IMR-90 (cell line): ENCODE measurements at regions of chr10 and their contacts with region 1.

Region 1: GRCh38 chr10:4767033-4767814 is 58.8 kb upstream of the AKR1E2 start:
- DNase-seq: peak; percentile 66
- ATAC-seq: no peak
- H3K4me3 ChIP-seq: no peak overlapping the region
- H3K27ac ChIP-seq: peak overlapping the region; percentile 57
- H3K4me1 ChIP-seq: peaks cover 22% of the 10 kb centered on the region
- H3K27me3 ChIP-seq: no peaks in the 10 kb centered on the region
- CTCF ChIP-seq: peak; percentile 76
- POLR2A ChIP-seq: no peak
- RAD21 ChIP-seq: peak; percentile 83

Region 2: GRCh38 chr10:3239066-3239919 is 1527.9 kb before region 1 on chr10:
- CTCF ChIA-PET with region 1: no interaction called
- POLR2A ChIA-PET with region 1: no interaction called
- dilution Hi-C with region 1: no loop called
- in situ Hi-C with region 1: loop called (anchors 10 kb)
- intact Hi-C with region 1: loop called (anchors 2 kb)
- DNase-seq: peak; percentile 68
- ATAC-seq: peak; percentile 94
- H3K4me3 ChIP-seq: no peak overlapping the region
- H3K27ac ChIP-seq: peak overlapping the region; percentile 77; the same call in 1 of the 2 replicates
- H3K4me1 ChIP-seq: peaks cover 9% of the 10 kb centered on the region; the same call in 1 of the 2 replicates
- H3K27me3 ChIP-seq: no peaks in the 10 kb centered on the region
- CTCF ChIP-seq: peak; percentile 91
- POLR2A ChIP-seq: 0 out of 2 replicates have a peak, but pooled peaks have one; percentile 25
- RAD21 ChIP-seq: peak; percentile 99

Region 3: DNA sequence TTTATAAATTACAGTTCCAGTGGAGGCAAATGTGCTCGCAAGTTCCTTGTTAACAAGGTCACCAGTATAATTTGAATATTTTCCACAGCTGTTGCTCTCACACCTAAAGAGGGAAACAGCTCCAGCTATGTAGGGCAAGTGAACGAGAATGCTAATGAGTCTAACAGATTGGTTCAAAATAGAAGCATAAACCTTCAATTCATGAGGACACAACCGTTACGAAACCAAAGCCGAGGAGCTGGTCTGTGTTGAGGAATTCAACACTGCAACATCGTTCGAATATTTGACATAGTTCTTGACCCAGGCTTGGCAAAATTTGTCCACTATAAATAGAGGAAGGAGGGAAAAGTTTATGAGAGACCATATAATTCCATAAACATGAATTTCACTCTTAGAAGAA is 1143.5 kb before region 1 on chr10:
- CTCF ChIA-PET with region 1: no interaction called
- POLR2A ChIA-PET with region 1: no interaction called
- dilution Hi-C with region 1: no loop called
- in situ Hi-C with region 1: no loop called
- intact Hi-C with region 1: loop called (anchors 10 kb)
- DNase-seq: peak; percentile 87
- ATAC-seq: peak; percentile 78
- H3K4me3 ChIP-seq: no peak overlapping the region
- H3K27ac ChIP-seq: peak overlapping the region; percentile 15; the same call in 1 of the 2 replicates
- H3K4me1 ChIP-seq: peaks cover 11% of the 10 kb centered on the region
- H3K27me3 ChIP-seq: no peaks in the 10 kb centered on the region
- CTCF ChIP-seq: no peak
- POLR2A ChIP-seq: no peak
- RAD21 ChIP-seq: no peak

Region 4: GRCh38 chr10:4270116-4270515 is 497.1 kb before region 1 on chr10:
- CTCF ChIA-PET with region 1: no interaction called
- POLR2A ChIA-PET with region 1: no interaction called
- dilution Hi-C with region 1: no loop called
- in situ Hi-C with region 1: loop called (anchors 25 kb)
- intact Hi-C with region 1: no loop called
- DNase-seq: peak; percentile 92
- ATAC-seq: peak; percentile 94
- H3K4me3 ChIP-seq: no peak overlapping the region
- H3K27ac ChIP-seq: 0 out of 2 replicates have a peak overlapping the region, but pooled peaks have one; percentile 36
- H3K4me1 ChIP-seq: peaks cover 6% of the 10 kb centered on the region
- H3K27me3 ChIP-seq: no peaks in the 10 kb centered on the region
- CTCF ChIP-seq: no peak
- POLR2A ChIP-seq: no peak
- RAD21 ChIP-seq: 0 out of 2 replicates have a peak, but pooled peaks have one; percentile 6

Region 5: GRCh38 chr10:4316161-4316810 is 450.9 kb before region 1 on chr10:
- CTCF ChIA-PET with region 1: no interaction called
- POLR2A ChIA-PET with region 1: no interaction called
- dilution Hi-C with region 1: no loop called
- in situ Hi-C with region 1: no loop called
- intact Hi-C with region 1: no loop called
- DNase-seq: peak; percentile 89
- ATAC-seq: peak; percentile 77
- H3K4me3 ChIP-seq: no peak overlapping the region; the same call in 1 of the 2 replicates
- H3K27ac ChIP-seq: peak overlapping the region; percentile 1
- H3K4me1 ChIP-seq: no peaks in the 10 kb centered on the region
- H3K27me3 ChIP-seq: no peaks in the 10 kb centered on the region
- CTCF ChIP-seq: peak; percentile 29; the same call in 1 of the 2 replicates
- POLR2A ChIP-seq: no peak
- RAD21 ChIP-seq: no peak; the same call in 1 of the 2 replicates

Region 6: DNA sequence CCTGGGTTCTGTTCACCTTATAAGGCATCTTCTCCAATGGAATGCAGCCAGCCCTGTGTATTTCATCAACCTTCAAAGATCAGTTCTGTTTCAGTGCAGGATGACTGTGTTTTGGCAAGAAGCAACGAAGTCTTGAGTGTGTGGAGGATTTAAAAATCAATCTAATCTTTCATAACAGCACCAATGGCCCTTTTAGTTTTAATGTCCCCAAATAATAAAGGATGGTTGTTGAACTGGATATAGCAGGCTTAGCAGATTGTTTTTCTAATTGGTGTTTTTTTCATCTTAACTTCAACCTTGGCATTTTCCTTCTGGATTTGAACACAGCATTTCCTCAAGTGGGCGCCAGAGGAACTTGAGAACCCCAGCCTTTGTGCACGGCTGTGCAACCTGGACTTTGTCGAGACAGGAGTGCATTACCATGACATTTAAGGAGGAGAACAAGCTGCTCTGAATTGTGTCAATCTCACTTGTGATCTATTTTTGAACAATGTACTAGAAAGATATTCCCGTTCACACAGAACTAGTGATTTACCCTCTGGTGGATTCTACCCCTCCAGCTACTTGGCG is 254.5 kb before region 1 on chr10:
- CTCF ChIA-PET with region 1: no interaction called
- POLR2A ChIA-PET with region 1: no interaction called
- dilution Hi-C with region 1: no loop called
- in situ Hi-C with region 1: no loop called
- intact Hi-C with region 1: loop called (anchors 2 kb)
- DNase-seq: peak; percentile 71
- ATAC-seq: peak; percentile 77
- H3K4me3 ChIP-seq: no peak overlapping the region
- H3K27ac ChIP-seq: no peak overlapping the region
- H3K4me1 ChIP-seq: no peaks in the 10 kb centered on the region
- H3K27me3 ChIP-seq: no peaks in the 10 kb centered on the region
- CTCF ChIP-seq: peak; percentile 67
- POLR2A ChIP-seq: no peak
- RAD21 ChIP-seq: peak; percentile 71

Region 7: DNA sequence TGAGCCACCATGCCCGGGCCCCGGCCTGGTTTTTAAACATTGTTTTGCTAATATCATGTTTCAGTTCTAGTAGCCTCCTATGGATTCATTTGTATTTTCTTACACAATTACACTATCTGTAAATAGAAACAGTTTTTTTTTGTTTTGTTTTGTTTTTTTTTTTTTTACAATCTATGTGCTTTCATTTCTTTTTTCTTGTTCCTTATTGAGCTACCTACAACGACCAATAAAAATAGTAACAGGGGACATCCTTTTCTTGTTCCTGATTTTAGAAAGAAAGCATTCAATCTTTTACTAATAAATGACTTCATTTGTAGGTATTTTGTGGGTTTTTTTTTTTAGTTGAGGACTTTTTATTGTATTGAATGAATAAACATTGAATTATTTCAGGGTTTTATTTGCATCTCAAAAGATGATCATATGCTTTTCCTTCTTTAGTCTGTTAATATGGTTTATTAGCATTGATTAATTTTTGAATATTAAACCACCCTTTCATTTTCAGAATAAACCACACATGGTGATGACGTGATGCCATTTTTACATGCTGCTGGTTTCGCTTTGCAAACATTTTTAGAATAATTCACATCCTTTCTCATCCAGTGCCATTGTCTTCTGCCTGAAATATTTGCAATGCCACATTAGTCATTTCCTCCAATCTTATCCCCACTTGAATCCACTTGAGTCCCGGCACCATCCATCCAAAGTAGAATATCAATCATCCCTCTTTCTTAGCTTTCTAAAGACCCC is 40.7 kb after region 1 on chr10:
- CTCF ChIA-PET with region 1: no interaction called
- POLR2A ChIA-PET with region 1: no interaction called
- dilution Hi-C with region 1: no loop called
- in situ Hi-C with region 1: no loop called
- intact Hi-C with region 1: loop called (anchors 2 kb)
- DNase-seq: peak; percentile 86
- ATAC-seq: peak; percentile 25
- H3K4me3 ChIP-seq: no peak overlapping the region
- H3K27ac ChIP-seq: peak overlapping the region; percentile 53
- H3K4me1 ChIP-seq: peaks cover 9% of the 10 kb centered on the region
- H3K27me3 ChIP-seq: no peaks in the 10 kb centered on the region
- CTCF ChIP-seq: no peak
- POLR2A ChIP-seq: no peak
- RAD21 ChIP-seq: no peak